GM12878 (cell line): ENCODE measurements at regions of chr3 and their contacts with region 1.

Region 1: GRCh38 chr3:183468424-183468823 is 40.0 kb upstream of the MCF2L2 start:
- DNase-seq: no peak
- ATAC-seq: no peak
- H3K4me3 ChIP-seq: no peak overlapping the region
- H3K27ac ChIP-seq: no peak overlapping the region
- H3K4me1 ChIP-seq: no peaks in the 10 kb centered on the region
- H3K27me3 ChIP-seq: no peaks in the 10 kb centered on the region
- CTCF ChIP-seq: no peak
- EP300 ChIP-seq: no peak
- POLR2A ChIP-seq: no peak
- RAD21 ChIP-seq: no peak

Region 2: GRCh38 chr3:183481582-183481981 is 13.2 kb after region 1 on chr3:
- CTCF ChIA-PET with region 1: interaction called, 12 read pairs
- POLR2A ChIA-PET with region 1: no interaction called
- RAD21 ChIA-PET with region 1: interaction called, 13 read pairs
- SMC1A ChIA-PET with region 1: interaction called, 25 read pairs
- in situ Hi-C with region 1: no loop called
- intact Hi-C with region 1: no loop called
- DNase-seq: no peak
- ATAC-seq: peak; percentile 6; the same call in 2 of the 3 replicates
- H3K4me3 ChIP-seq: no peak overlapping the region
- H3K27ac ChIP-seq: no peak overlapping the region
- H3K4me1 ChIP-seq: no peaks in the 10 kb centered on the region
- H3K27me3 ChIP-seq: no peaks in the 10 kb centered on the region
- CTCF ChIP-seq: no peak
- EP300 ChIP-seq: no peak
- POLR2A ChIP-seq: no peak
- RAD21 ChIP-seq: no peak

Region 3: GRCh38 chr3:183527428-183528379 is 59.3 kb after region 1 on chr3:
- CTCF ChIA-PET with region 1: interaction called, 4 read pairs
- POLR2A ChIA-PET with region 1: no interaction called
- RAD21 ChIA-PET with region 1: interaction called, 4 read pairs
- SMC1A ChIA-PET with region 1: interaction called, 13 read pairs
- in situ Hi-C with region 1: no loop called
- intact Hi-C with region 1: no loop called
- DNase-seq: peak; percentile 73
- ATAC-seq: peak; percentile 82
- H3K4me3 ChIP-seq: no peak overlapping the region; the same call in 1 of the 2 replicates
- H3K27ac ChIP-seq: peak overlapping the region; percentile 67
- H3K4me1 ChIP-seq: peaks cover 39% of the 10 kb centered on the region
- H3K27me3 ChIP-seq: no peaks in the 10 kb centered on the region
- CTCF ChIP-seq: no peak
- EP300 ChIP-seq: peak; percentile 93 to 96
- POLR2A ChIP-seq: no peak
- RAD21 ChIP-seq: peak; percentile 16; the same call in 1 of the 2 replicates

Region 4: DNA sequence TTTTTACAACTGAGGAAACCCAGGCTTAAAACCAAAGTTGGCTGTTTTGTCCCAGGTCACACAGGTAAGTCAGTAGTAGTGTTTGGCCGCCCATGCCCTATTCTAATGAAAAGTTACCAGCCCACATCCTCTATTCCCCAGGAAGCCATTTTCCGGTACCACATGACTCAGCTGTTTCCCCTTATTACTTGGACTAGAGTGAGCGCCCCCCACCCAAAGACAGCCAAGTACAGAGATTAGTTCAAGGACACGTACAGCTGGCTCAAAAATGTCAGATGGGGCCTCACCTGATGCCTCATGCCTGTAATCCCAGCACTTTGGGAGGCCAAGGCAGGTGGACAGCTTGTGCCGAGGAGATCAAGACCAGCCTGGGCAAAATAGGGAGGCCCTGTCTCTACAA is 95.6 kb after region 1 on chr3:
- CTCF ChIA-PET with region 1: interaction called, 42 read pairs
- POLR2A ChIA-PET with region 1: no interaction called
- RAD21 ChIA-PET with region 1: interaction called, 17 read pairs
- SMC1A ChIA-PET with region 1: interaction called, 42 read pairs
- in situ Hi-C with region 1: loop called (anchors 5 kb)
- intact Hi-C with region 1: loop called (anchors 1 kb)
- DNase-seq: no peak
- ATAC-seq: peak; percentile 20
- H3K4me3 ChIP-seq: no peak overlapping the region
- H3K27ac ChIP-seq: no peak overlapping the region
- H3K4me1 ChIP-seq: no peaks in the 10 kb centered on the region; the same call in 1 of the 2 replicates
- H3K27me3 ChIP-seq: no peaks in the 10 kb centered on the region
- CTCF ChIP-seq: no peak
- EP300 ChIP-seq: no peak
- POLR2A ChIP-seq: no peak
- RAD21 ChIP-seq: no peak

Region 5: DNA sequence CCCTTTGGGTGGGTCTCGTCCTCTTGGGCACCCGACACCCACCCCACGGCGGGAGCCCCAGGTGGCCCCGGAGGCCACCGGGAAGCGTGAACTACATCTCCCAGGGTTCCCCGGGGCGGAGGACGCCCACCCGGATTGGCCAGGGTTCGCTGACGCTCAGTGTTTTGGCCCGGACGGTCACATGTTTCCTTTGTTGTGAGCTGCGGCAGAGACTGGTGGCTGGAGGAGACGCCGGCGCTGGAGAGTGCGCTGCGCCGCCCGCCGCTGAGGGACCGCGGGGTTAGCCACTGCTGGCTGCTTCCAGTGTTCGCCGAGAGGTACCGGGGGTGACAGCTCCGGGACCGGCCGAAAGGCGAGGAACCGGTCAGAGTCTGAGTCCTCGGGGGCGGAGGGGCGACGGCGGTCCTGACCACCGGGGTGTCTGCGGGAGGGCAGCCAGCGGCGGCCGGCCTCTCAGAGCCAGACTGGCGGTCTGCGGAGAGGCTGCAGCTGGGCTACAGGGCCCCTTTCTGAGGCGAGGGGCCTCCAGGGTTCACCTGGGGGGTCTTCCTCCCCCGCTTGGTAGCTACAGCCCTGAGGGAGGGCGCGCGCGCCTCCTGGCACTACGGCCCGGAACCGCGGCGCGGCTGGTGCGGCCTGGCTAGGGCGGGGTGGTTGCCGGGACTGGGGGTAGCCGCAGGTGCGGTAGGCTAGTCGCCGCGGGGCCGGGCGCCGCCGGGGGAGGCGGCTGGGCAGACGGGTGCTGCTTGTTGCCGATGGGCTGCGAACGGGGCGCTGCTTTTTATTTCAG is 167.2 kb after region 1 on chr3 and contains the start of gene KLHL24:
- CTCF ChIA-PET with region 1: interaction called, 3 read pairs
- POLR2A ChIA-PET with region 1: interaction called, 4 read pairs
- RAD21 ChIA-PET with region 1: interaction called, 4 read pairs
- SMC1A ChIA-PET with region 1: interaction called, 10 read pairs
- in situ Hi-C with region 1: no loop called
- intact Hi-C with region 1: loop called (anchors 2 kb)
- DNase-seq: peak; percentile 60
- ATAC-seq: peak; percentile 91
- H3K4me3 ChIP-seq: peak within 1 kb of the TSS; percentile 80
- H3K27ac ChIP-seq: peak within 1 kb of the TSS; percentile 77
- H3K4me1 ChIP-seq: peaks cover 19% of the 10 kb centered on the region; the same call in 1 of the 2 replicates
- H3K27me3 ChIP-seq: no peaks in the 10 kb centered on the region; a peak in 1 of 4 replicates
- CTCF ChIP-seq: 0 out of 6 replicates have a peak, but pooled peaks of 1 of the 3 experiments have one; percentile 5
- EP300 ChIP-seq: no peak
- POLR2A ChIP-seq: peak; percentile 90
- RAD21 ChIP-seq: no peak
- polyA plus RNA-seq, gene KLHL24: 0.91 to 1.6 TPM

Region 6: GRCh38 chr3:183766745-183767606 is 298.6 kb after region 1 on chr3:
- CTCF ChIA-PET with region 1: interaction called, 71 read pairs
- POLR2A ChIA-PET with region 1: interaction called, 3 read pairs
- RAD21 ChIA-PET with region 1: interaction called, 35 read pairs
- SMC1A ChIA-PET with region 1: interaction called, 50 read pairs
- in situ Hi-C with region 1: loop called (anchors 5 kb)
- intact Hi-C with region 1: loop called (anchors 1 kb)
- DNase-seq: no peak
- ATAC-seq: peak; percentile 99
- H3K4me3 ChIP-seq: no peak overlapping the region
- H3K27ac ChIP-seq: no peak overlapping the region
- H3K4me1 ChIP-seq: no peaks in the 10 kb centered on the region
- H3K27me3 ChIP-seq: no peaks in the 10 kb centered on the region
- CTCF ChIP-seq: peak; percentile 67 to 82 (median 79)
- EP300 ChIP-seq: no peak
- POLR2A ChIP-seq: no peak
- RAD21 ChIP-seq: peak; percentile 89

Region 7: GRCh38 chr3:183884427-183885296 is 416.2 kb after region 1 on chr3 and contains the start of gene PARL:
- CTCF ChIA-PET with region 1: interaction called, 9 read pairs
- POLR2A ChIA-PET with region 1: no interaction called
- RAD21 ChIA-PET with region 1: interaction called, 19 read pairs
- SMC1A ChIA-PET with region 1: interaction called, 7 read pairs
- in situ Hi-C with region 1: no loop called
- intact Hi-C with region 1: loop called (anchors 1 kb)
- DNase-seq: peak; percentile 70
- ATAC-seq: peak; percentile 99
- H3K4me3 ChIP-seq: peak within 1 kb of the TSS; percentile 94
- H3K27ac ChIP-seq: peak within 1 kb of the TSS; percentile 76
- H3K4me1 ChIP-seq: peaks cover 4% of the 10 kb centered on the region
- H3K27me3 ChIP-seq: no peaks in the 10 kb centered on the region
- CTCF ChIP-seq: peak; percentile 98; a peak in 5 of 6 replicates
- EP300 ChIP-seq: no peak
- POLR2A ChIP-seq: peak; percentile 98
- RAD21 ChIP-seq: peak; percentile 67
- polyA plus RNA-seq, gene PARL: 49.7 to 83.0 TPM